PC-3 (cell line): ENCODE measurements at regions of chr6 and their contacts with region 1.

Region 1: DNA sequence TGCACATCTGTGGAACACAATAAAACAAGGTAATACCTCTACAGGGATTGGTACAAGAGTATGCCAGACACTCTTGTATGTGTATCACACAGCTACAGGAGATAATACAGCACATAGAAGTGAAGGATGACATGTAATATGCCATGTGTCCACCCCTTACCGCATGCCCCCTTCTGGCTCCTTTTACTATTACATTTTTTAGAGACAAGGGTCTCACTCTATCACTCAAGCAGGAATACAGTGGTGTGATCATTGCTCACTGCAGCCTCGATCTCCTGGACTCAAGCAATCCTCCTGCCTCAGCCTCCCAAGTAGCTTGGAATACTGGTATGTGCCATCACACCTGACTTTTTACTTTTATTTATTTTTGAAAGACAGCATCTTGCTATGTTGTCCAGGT is 4.2 kb upstream of the NCR3 start:
- DNase-seq: peak; percentile 58
- ATAC-seq: peak; percentile 76
- H3K4me3 ChIP-seq: no peak overlapping the region
- H3K27ac ChIP-seq: no peak overlapping the region
- H3K4me1 ChIP-seq: no peaks in the 10 kb centered on the region
- H3K27me3 ChIP-seq: no peaks in the 10 kb centered on the region
- CTCF ChIP-seq: peak; percentile 61

Region 2: GRCh38 chr6:29763491-29764289 is 1833.3 kb before region 1 on chr6:
- CTCF ChIA-PET with region 1: no interaction called
- POLR2A ChIA-PET with region 1: interaction called, 14 read pairs
- intact Hi-C with region 1: no loop called
- DNase-seq: peak; percentile 73
- ATAC-seq: peak; percentile 69
- H3K4me3 ChIP-seq: no peak overlapping the region
- H3K27ac ChIP-seq: peak overlapping the region; percentile 29
- H3K4me1 ChIP-seq: peaks cover 27% of the 10 kb centered on the region
- H3K27me3 ChIP-seq: no peaks in the 10 kb centered on the region
- CTCF ChIP-seq: no peak

Region 3: GRCh38 chr6:31546962-31547726 is 49.9 kb before region 1 on chr6 and contains the start of gene NFKBIL1:
- CTCF ChIA-PET with region 1: interaction called, 37 read pairs
- POLR2A ChIA-PET with region 1: no interaction called
- intact Hi-C with region 1: loop called (anchors 1 kb)
- DNase-seq: peak; percentile 95
- ATAC-seq: peak; percentile 81
- H3K4me3 ChIP-seq: peak within 1 kb of the TSS; percentile 76
- H3K27ac ChIP-seq: peak within 1 kb of the TSS; percentile 41
- H3K4me1 ChIP-seq: peaks cover 20% of the 10 kb centered on the region
- H3K27me3 ChIP-seq: no peaks in the 10 kb centered on the region
- CTCF ChIP-seq: no peak
- total RNA-seq, gene NFKBIL1: 38.2 and 46.9 TPM in 2 replicates

Region 4: GRCh38 chr6:31580807-31581433 is 16.1 kb before region 1 on chr6:
- CTCF ChIA-PET with region 1: interaction called, 6 read pairs
- POLR2A ChIA-PET with region 1: no interaction called
- intact Hi-C with region 1: loop called (anchors 1 kb)
- DNase-seq: peak; percentile 75
- ATAC-seq: peak; percentile 98
- H3K4me3 ChIP-seq: peak overlapping the region; percentile 83
- H3K27ac ChIP-seq: no peak overlapping the region
- H3K4me1 ChIP-seq: peaks cover 11% of the 10 kb centered on the region; the same call in 1 of the 2 replicates
- H3K27me3 ChIP-seq: no peaks in the 10 kb centered on the region
- CTCF ChIP-seq: peak; percentile 95